A673 (cell line): ENCODE measurements at regions of chr17 and their contacts with region 1.

Region 1: GRCh38 chr17:9959377-9959981 is 54.4 kb upstream of the RCVRN start:
- DNase-seq: peak; percentile 61
- H3K4me3 ChIP-seq: no peak overlapping the region
- H3K27ac ChIP-seq: no peak overlapping the region
- H3K4me1 ChIP-seq: no peaks in the 10 kb centered on the region
- H3K27me3 ChIP-seq: no peaks in the 10 kb centered on the region
- CTCF ChIP-seq: peak; percentile 78

Region 2: DNA sequence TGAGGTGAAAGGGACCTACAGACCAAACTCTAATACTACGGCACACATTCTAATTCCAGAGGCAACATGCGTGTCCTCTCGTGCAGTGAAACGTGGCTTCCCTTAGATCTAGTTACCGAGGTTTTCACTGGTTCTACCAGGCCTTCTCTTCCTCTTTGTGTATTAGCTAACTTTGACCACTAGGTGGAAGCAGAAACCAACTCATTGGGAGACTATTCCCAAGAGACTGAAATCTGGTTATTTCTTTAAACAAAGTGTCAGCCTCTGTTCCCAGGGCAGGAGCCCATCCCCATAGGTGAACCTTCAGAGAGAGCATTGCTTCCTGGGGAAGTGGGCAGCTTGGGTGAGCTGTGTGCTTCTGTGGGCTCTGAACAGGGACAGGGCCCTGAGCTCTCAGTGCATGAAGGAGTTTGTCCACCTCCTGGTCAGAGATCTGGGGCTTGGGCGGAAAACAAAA is 34.7 kb before region 1 on chr17:
- CTCF ChIA-PET with region 1: interaction called, 3 read pairs
- POLR2A ChIA-PET with region 1: no interaction called
- intact Hi-C with region 1: loop called (anchors 1 kb)
- DNase-seq: peak; percentile 85
- H3K4me3 ChIP-seq: no peak overlapping the region
- H3K27ac ChIP-seq: no peak overlapping the region
- H3K4me1 ChIP-seq: no peaks in the 10 kb centered on the region
- H3K27me3 ChIP-seq: no peaks in the 10 kb centered on the region
- CTCF ChIP-seq: peak; percentile 83

Region 3: GRCh38 chr17:11485336-11486100 is 1526.0 kb after region 1 on chr17:
- CTCF ChIA-PET with region 1: no interaction called
- POLR2A ChIA-PET with region 1: interaction called, 12 read pairs
- intact Hi-C with region 1: no loop called
- DNase-seq: no peak
- H3K4me3 ChIP-seq: no peak overlapping the region
- H3K27ac ChIP-seq: peak overlapping the region; percentile 68
- H3K4me1 ChIP-seq: peaks cover 55% of the 10 kb centered on the region
- H3K27me3 ChIP-seq: no peaks in the 10 kb centered on the region
- CTCF ChIP-seq: no peak